Activated CD4-positive, alpha-beta memory T cell treated with anti-CD3 and anti-CD28 coated beads for 36 hours (primary cell): ENCODE measurements at regions of chr7 and their contacts with region 1.

Region 1: GRCh38 chr7:32506266-32507054 is 11.2 kb downstream of the AVL9 start:
- DNase-seq: peak; percentile 50
- H3K4me3 Mint-ChIP-seq: no peak overlapping the region
- H3K27ac Mint-ChIP-seq: peak overlapping the region; percentile 52
- H3K4me1 Mint-ChIP-seq: peaks cover 56% of the 10 kb centered on the region
- H3K27me3 Mint-ChIP-seq: no peaks in the 10 kb centered on the region

Region 2: GRCh38 chr7:32522746-32523468 is 16.4 kb after region 1 on chr7:
- CTCF ChIA-PET with region 1: no interaction called
- POLR2A ChIA-PET with region 1: no interaction called
- intact Hi-C with region 1: no loop called
- DNase-seq: no peak
- H3K4me3 Mint-ChIP-seq: no peak overlapping the region
- H3K27ac Mint-ChIP-seq: no peak overlapping the region
- H3K4me1 Mint-ChIP-seq: peaks cover 11% of the 10 kb centered on the region
- H3K27me3 Mint-ChIP-seq: no peaks in the 10 kb centered on the region

Region 3: DNA sequence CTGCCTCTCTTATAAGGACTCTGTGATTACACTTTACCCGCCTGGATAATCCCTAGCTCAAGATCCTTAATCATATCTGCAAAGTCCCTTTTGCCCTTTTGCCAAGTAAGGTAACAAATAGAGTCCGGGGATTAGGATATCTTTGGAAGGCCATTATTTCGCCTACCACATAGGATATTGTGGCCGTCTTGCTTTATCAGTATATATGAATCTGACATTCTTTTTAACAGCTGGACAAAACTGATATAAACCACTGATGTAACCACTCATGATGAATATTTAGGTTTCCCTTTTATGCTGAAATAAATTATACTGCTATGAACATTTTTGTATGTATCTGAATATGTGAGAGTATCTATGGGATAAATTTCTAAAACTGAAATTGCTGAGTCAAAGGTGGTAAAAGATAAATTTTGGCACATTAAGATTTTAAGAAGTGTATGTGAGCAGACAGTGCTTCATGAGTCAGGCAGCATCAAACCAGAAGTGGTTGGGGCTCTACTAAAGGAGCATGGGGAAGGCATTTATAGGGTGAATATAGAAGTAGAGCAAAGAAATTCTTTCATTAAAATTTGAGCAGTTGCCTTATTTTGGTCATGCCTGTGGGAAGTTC is 33.6 kb after region 1 on chr7:
- CTCF ChIA-PET with region 1: no interaction called
- POLR2A ChIA-PET with region 1: no interaction called
- intact Hi-C with region 1: loop called (anchors 1 kb)
- DNase-seq: peak; percentile 20
- H3K4me3 Mint-ChIP-seq: no peak overlapping the region
- H3K27ac Mint-ChIP-seq: peak overlapping the region; percentile 0
- H3K4me1 Mint-ChIP-seq: peaks cover 34% of the 10 kb centered on the region
- H3K27me3 Mint-ChIP-seq: no peaks in the 10 kb centered on the region